ENCODE measurements at regions of chr1 and their contacts with region 1.

Region 1: GRCh38 chr1:180863158-180863775 is 49.4 kb upstream of the KIAA1614 start:
- DNase-seq: peak; percentile 40
- ATAC-seq: no peak
- H3K4me3 Mint-ChIP-seq: no peak overlapping the region
- H3K27ac Mint-ChIP-seq: no peak overlapping the region
- H3K4me1 Mint-ChIP-seq: no peaks in the 10 kb centered on the region
- H3K27me3 Mint-ChIP-seq: no peaks in the 10 kb centered on the region

Region 2: GRCh38 chr1:180515864-180516388 is 347.3 kb before region 1 on chr1:
- CTCF ChIA-PET with region 1: interaction called, 71 read pairs
- POLR2A ChIA-PET with region 1: interaction called, 3 read pairs
- DNase-seq: peak; percentile 73
- ATAC-seq: peak; percentile 100
- H3K4me3 Mint-ChIP-seq: no peak overlapping the region
- H3K27ac Mint-ChIP-seq: no peak overlapping the region
- H3K4me1 Mint-ChIP-seq: peaks cover 4% of the 10 kb centered on the region
- H3K27me3 Mint-ChIP-seq: peaks cover 3% of the 10 kb centered on the region

Region 3: DNA sequence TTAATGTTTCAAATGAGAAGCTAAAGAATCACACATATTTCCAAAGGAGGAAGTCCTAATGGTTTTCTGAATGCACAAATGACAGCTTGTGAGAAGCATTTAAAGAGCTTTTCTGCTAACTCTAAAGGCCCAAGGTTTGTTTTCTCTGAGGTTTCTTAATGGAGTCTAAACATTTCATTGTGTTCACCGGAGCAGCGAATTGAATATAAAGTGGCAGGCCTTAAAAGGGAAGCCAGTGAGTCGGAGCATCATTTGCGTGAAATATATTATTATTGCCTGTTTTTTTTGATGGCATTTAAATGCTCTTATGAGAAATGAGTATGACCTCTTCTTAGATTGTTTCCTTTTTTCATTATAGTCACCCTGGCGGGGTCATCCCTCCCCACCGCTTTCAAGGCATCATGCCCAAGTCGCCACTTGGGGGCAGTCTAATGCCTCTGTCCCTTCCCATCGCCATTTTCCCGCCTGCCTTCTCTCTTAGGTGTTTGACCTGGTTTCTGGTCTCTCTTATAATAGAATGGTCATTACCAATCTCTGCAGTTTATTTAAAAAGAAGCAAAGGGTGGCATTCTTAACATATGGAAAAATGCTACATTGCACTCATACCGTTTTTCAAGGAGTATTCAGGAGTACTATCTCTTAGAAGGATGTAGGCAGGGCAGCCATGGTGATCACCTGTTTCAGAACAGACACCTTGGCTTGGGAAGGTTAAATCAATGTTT is 329.8 kb before region 1 on chr1:
- CTCF ChIA-PET with region 1: interaction called, 80 read pairs
- POLR2A ChIA-PET with region 1: no interaction called
- DNase-seq: peak; percentile 74
- ATAC-seq: peak; percentile 81
- H3K4me3 Mint-ChIP-seq: no peak overlapping the region
- H3K27ac Mint-ChIP-seq: no peak overlapping the region
- H3K4me1 Mint-ChIP-seq: peaks cover 3% of the 10 kb centered on the region
- H3K27me3 Mint-ChIP-seq: peaks cover 10% of the 10 kb centered on the region

Region 4: DNA sequence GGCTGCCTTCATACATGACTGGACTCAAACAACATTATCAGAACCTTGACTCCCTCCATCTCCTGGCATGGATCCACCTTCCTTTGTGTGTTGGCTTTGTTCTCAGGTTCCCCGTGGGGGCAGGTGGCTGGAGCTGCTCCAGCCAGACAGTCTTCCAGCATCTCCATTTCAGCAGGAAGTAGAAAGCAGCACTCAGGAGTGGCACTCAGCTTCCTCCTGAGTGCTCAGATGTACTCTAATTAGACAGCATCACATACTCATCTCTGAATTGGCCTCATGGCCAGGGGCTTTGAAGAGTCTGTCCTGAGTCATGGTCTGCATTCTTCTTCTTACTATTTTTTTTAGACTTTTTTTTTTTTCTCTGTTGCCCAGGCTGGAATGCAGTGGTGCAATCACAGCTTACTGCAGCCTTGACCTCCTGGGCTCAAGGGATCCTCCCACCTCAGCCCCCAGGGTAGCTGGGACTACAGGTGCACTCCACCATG is 276.6 kb before region 1 on chr1:
- CTCF ChIA-PET with region 1: interaction called, 12 read pairs
- POLR2A ChIA-PET with region 1: no interaction called
- DNase-seq: no peak
- ATAC-seq: no peak
- H3K4me3 Mint-ChIP-seq: no peak overlapping the region
- H3K27ac Mint-ChIP-seq: no peak overlapping the region
- H3K4me1 Mint-ChIP-seq: peaks cover 21% of the 10 kb centered on the region
- H3K27me3 Mint-ChIP-seq: peaks cover 6% of the 10 kb centered on the region

Region 5: DNA sequence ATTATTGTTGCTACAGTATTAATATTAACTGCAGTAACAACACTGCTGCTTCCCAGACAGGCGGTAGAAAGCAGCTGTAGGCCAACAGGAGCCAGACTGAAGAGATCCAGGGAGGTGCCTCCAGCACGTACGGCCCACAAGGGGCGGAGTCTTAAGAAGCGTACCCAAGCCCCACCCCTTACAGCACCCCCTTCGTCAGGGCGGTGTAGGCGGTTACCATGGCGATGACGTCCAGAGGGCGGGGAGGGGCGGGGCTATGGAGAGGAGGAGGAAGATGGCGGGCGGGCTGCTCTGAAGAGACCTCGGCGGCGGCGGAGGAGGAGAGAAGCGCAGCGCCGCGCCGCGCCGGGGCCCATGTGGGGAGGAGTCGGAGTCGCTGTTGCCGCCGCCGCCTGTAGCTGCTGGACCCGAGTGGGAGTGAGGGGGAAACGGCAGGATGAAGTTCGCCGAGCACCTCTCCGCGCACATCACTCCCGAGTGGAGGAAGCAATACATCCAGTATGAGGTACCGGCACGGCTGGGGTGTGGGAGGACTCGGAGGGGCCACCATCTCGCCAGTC is 231.4 kb before region 1 on chr1 and contains the start of gene XPR1:
- CTCF ChIA-PET with region 1: interaction called, 21 read pairs
- POLR2A ChIA-PET with region 1: interaction called, 3 read pairs
- DNase-seq: peak; percentile 99
- ATAC-seq: peak; percentile 98
- H3K4me3 Mint-ChIP-seq: no peak within 1 kb of the TSS
- H3K27ac Mint-ChIP-seq: no peak within 1 kb of the TSS
- H3K4me1 Mint-ChIP-seq: peaks cover 9% of the 10 kb centered on the region
- H3K27me3 Mint-ChIP-seq: peaks cover 5% of the 10 kb centered on the region
- total RNA-seq, gene XPR1: 17.7 to 20.9 TPM

Region 6: DNA sequence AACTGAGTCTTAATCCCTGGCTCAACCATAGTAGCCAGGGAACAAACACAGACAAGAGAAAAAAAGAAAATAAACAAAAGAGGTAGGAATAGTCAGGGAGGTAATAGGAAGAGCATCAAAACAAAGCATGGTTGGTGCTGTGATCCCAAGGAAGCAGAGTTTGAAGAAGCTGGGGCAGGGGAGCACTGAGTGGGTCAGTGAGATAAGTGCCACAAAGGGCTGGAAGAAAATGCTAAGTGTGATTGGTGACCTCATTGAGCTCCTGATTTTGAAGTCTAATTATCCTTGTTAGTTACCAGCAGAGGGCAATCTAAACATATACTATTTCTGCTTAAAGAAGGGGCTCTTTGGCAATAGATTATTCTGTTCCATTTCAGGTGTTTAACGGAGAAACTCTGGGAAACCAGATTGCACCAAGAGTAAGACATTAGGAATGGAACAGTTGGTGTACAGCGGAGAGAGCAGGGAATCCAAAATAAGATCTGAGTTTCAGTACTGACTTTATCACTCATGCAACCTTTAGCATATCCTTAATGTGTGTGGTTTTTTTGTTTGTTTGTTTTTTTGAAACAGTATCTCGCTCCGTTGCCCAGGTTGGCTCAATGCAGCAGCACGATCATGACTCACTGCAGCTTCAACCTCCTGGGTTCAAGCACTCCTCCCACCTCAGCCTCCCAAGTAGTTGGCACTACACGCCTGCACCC is 18.7 kb after region 1 on chr1:
- CTCF ChIA-PET with region 1: interaction called, 10 read pairs
- POLR2A ChIA-PET with region 1: no interaction called
- DNase-seq: no peak
- ATAC-seq: no peak
- H3K4me3 Mint-ChIP-seq: no peak overlapping the region
- H3K27ac Mint-ChIP-seq: no peak overlapping the region
- H3K4me1 Mint-ChIP-seq: no peaks in the 10 kb centered on the region
- H3K27me3 Mint-ChIP-seq: no peaks in the 10 kb centered on the region

Region 7: GRCh38 chr1:181206513-181206912 is 343.2 kb after region 1 on chr1:
- CTCF ChIA-PET with region 1: no interaction called
- POLR2A ChIA-PET with region 1: no interaction called
- DNase-seq: no peak
- ATAC-seq: no peak
- H3K4me3 Mint-ChIP-seq: no peak overlapping the region
- H3K27ac Mint-ChIP-seq: no peak overlapping the region
- H3K4me1 Mint-ChIP-seq: no peaks in the 10 kb centered on the region
- H3K27me3 Mint-ChIP-seq: peaks cover 13% of the 10 kb centered on the region